Activated T-helper 1 cell treated with anti-CD3 and anti-CD28 coated beads, Interleukin-12 subunit alpha, Interleukin-12 subunit beta, Interleukin-2, Interleukin-4 antibody, amounts not matched to agents 30 ng/mL and 10 ng/mL and 1 ng/mL, durations not matched to agents 14 hours and 24 hours and 36 hours (primary cell): ENCODE measurements at regions of chr5 and their contacts with region 1.

Region 1: GRCh38 chr5:31934156-31934555 is 240.0 kb downstream of the GOLPH3 start:
- DNase-seq: no peak
- H3K4me3 Mint-ChIP-seq: no peak overlapping the region
- H3K27ac Mint-ChIP-seq: no peak overlapping the region
- H3K4me1 Mint-ChIP-seq: no peaks in the 10 kb centered on the region
- H3K27me3 Mint-ChIP-seq: peaks cover 2% of the 10 kb centered on the region

Region 2: GRCh38 chr5:32076699-32077695 is 142.8 kb after region 1 on chr5:
- intact Hi-C with region 1: loop called (anchors 1 kb)
- DNase-seq: no peak
- H3K4me3 Mint-ChIP-seq: no peak overlapping the region
- H3K27ac Mint-ChIP-seq: no peak overlapping the region
- H3K4me1 Mint-ChIP-seq: no peaks in the 10 kb centered on the region
- H3K27me3 Mint-ChIP-seq: no peaks in the 10 kb centered on the region